A549 (cell line): ENCODE measurements at regions of chr7 and their contacts with region 1.

Region 1: DNA sequence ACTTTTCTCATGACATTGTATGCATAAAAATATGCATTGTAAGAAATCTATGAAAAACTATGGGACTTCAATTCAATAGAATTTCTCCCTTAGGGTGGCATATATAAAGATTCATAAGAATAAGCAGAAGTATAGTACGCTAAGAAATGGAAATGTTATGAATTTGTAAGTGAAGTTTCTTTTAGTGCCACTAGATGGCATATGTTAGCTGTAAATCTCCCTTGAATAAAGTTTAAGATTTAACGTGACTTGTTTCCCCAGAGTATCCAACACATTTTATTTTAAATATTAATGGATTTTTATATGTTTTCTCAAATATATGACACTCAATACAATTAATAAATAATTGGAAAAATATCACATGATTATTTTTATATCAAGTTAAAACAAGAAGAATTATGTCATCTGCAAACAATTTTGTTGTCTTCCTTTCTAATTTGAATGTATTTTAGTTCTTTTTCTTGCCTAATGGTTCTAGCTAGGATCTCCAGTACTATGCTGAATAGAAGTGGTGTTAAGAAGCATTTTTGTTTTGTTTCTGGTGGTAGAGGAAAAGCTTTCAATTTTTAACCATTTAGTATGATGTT is 287.2 kb downstream of the HGF start:
- DNase-seq: peak; percentile 28 to 57
- ATAC-seq: peak in 1 of 2 experiments; percentile 69; a peak in 3 of 6 replicates
- H3K4me3 ChIP-seq: no peak overlapping the region
- H3K27ac ChIP-seq: no peak overlapping the region; a peak in 1 of 6 replicates
- H3K4me1 ChIP-seq: no peaks in the 10 kb centered on the region
- CTCF ChIP-seq: peak; percentile 76
- EP300 ChIP-seq: no peak
- POLR2A ChIP-seq: no peak
- RAD21 ChIP-seq: peak; percentile 73 to 87

Region 2: GRCh38 chr7:81410471-81411125 is 72.1 kb before region 1 on chr7:
- CTCF ChIA-PET with region 1: no interaction called
- POLR2A ChIA-PET with region 1: no interaction called
- DNase-seq: no peak
- ATAC-seq: no peak
- H3K4me3 ChIP-seq: no peak overlapping the region
- H3K27ac ChIP-seq: no peak overlapping the region
- H3K4me1 ChIP-seq: 0 out of 3 replicates have a peak, but pooled peaks cover 5% of the 10 kb centered on the region
- CTCF ChIP-seq: no peak
- EP300 ChIP-seq: no peak
- POLR2A ChIP-seq: no peak
- RAD21 ChIP-seq: no peak

Region 3: GRCh38 chr7:81510122-81510521 is 27.4 kb after region 1 on chr7:
- CTCF ChIA-PET with region 1: no interaction called
- POLR2A ChIA-PET with region 1: no interaction called
- DNase-seq: no peak
- ATAC-seq: no peak
- H3K4me3 ChIP-seq: no peak overlapping the region
- H3K27ac ChIP-seq: no peak overlapping the region
- H3K4me1 ChIP-seq: no peaks in the 10 kb centered on the region
- CTCF ChIP-seq: no peak
- EP300 ChIP-seq: no peak
- POLR2A ChIP-seq: no peak
- RAD21 ChIP-seq: no peak

Region 4: DNA sequence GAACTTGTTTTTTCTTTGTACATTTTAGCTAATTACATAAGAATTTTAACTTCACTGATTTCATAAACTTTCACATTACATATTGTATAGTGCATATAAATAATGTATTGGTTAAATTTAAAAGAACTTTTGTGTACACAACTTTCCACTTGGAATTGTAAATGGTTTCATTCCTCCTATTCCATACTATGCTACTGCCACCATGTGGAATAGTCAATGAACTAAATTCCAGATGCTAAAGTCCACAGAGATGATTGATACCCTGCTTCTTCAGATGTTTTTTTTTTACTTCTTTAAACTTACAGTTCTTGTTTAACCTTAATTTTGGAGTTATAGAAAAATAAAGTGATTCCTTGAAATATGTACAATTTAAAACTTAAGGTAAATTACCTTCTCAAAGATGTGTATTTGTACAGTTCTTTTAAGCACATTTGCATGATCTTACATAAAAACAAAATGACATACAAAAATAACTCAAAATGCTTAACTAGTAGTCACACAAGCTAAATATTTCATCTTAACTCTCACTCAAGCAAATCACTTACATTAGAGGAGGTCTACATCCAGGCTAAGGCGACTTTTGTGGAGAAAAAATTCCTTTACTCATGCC is 534.7 kb after region 1 on chr7:
- CTCF ChIA-PET with region 1: interaction called, 12 read pairs
- POLR2A ChIA-PET with region 1: no interaction called
- DNase-seq: peak; percentile 32 to 47
- ATAC-seq: peak; percentile 68 to 74; a peak in 3 of 6 replicates
- H3K4me3 ChIP-seq: no peak overlapping the region
- H3K27ac ChIP-seq: peak overlapping the region in 1 of 2 experiments; percentile 23; a peak in 1 of 6 replicates
- H3K4me1 ChIP-seq: peaks cover 23% of the 10 kb centered on the region
- CTCF ChIP-seq: peak; percentile 77
- EP300 ChIP-seq: no peak
- POLR2A ChIP-seq: no peak
- RAD21 ChIP-seq: peak; percentile 82 to 84

Region 5: DNA sequence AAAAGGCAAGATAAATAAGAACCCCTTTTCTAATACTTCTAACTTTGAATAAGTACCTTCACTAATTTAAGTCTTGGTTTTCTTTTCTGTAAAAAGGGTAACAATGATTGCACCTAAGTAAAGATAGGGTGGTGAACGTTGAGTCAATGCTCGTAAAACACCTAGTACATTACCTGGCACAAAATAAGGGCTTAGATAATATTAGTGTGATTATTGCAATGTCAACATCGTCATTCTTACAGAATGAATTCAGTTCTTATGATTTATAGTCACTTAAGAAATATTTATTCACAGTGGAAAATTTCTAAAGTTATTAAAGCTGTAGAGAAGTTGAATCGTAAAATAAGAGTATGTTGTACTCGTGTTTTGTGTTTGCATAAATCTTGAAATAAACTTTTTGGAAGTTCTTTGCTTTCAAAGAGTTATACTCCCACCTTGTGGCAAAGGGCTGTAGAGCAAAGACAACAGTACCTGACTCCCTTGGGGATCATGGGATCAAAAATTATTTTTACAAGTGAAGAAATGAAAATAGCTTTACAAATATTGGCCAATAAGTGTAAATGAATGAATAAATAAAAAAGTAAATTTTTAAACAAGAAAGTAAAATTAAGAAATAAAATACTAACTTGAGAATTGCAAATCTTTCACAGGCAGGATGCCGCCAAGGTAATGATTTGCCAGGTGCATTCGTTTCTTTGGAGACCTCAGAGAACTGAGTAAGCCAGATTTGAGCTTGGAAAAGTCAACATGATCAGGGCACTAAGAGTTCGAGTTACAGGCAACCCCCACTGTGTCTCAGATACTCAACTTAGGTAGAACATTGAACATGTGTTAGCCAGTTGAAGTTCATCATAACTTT is 1246.7 kb after region 1 on chr7:
- CTCF ChIA-PET with region 1: interaction called, 14 read pairs
- POLR2A ChIA-PET with region 1: no interaction called
- DNase-seq: peak; percentile 17 to 59
- ATAC-seq: peak in 1 of 2 experiments; percentile 72; a peak in 3 of 6 replicates
- H3K4me3 ChIP-seq: no peak overlapping the region
- H3K27ac ChIP-seq: no peak overlapping the region
- H3K4me1 ChIP-seq: peaks cover 13% of the 10 kb centered on the region; the same call in 2 of the 3 replicates
- CTCF ChIP-seq: peak; percentile 94
- EP300 ChIP-seq: no peak
- POLR2A ChIP-seq: no peak
- RAD21 ChIP-seq: peak; percentile 90 to 91